Activated CD4-positive, alpha-beta T cell treated with anti-CD3 and anti-CD28 coated beads for 36 hours (primary cell): ENCODE measurements at regions of chr3 and their contacts with region 1.

Region 1: GRCh38 chr3:196081791-196082618 is at the start of gene TFRC:
- DNase-seq: peak; percentile 98
- ATAC-seq: peak; percentile 92
- H3K4me3 Mint-ChIP-seq: peak within 1 kb of the TSS; percentile 95
- H3K27ac Mint-ChIP-seq: peak within 1 kb of the TSS; percentile 93
- H3K4me1 Mint-ChIP-seq: peaks cover 30% of the 10 kb centered on the region
- H3K27me3 Mint-ChIP-seq: no peaks in the 10 kb centered on the region
- total RNA-seq, gene TFRC: 373 to 520 TPM

Region 2: DNA sequence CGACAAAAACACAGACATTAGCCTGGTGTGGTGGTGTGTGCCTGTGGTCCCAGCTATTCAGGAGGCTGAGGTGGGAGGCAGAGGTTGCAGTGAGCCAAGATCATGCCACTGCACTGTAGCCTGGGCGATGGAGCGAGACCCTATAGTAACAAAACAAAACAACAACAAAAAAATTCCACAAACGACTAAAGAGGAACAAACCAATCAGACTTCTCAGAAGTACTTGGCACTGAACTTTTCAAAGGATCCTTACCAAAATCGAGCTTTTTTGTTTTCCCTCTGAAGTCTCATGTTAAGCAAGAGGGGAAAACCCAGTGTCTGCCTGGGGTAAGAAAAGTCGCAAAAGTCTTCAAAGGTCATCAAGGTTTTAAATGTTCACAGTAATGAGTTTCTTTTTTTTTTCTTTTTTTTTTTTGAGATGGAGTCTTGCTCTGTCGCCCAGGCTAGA is 30.0 kb after region 1 on chr3:
- CTCF ChIA-PET with region 1: interaction called, 4 read pairs
- POLR2A ChIA-PET with region 1: interaction called, 6 read pairs
- intact Hi-C with region 1: loop called in 1 of 2 experiments (anchors 1 kb)
- DNase-seq: peak; percentile 52
- ATAC-seq: peak; percentile 91
- H3K4me3 Mint-ChIP-seq: peak overlapping the region; percentile 50
- H3K27ac Mint-ChIP-seq: peak overlapping the region; percentile 85
- H3K4me1 Mint-ChIP-seq: peaks cover 20% of the 10 kb centered on the region
- H3K27me3 Mint-ChIP-seq: no peaks in the 10 kb centered on the region

Region 3: DNA sequence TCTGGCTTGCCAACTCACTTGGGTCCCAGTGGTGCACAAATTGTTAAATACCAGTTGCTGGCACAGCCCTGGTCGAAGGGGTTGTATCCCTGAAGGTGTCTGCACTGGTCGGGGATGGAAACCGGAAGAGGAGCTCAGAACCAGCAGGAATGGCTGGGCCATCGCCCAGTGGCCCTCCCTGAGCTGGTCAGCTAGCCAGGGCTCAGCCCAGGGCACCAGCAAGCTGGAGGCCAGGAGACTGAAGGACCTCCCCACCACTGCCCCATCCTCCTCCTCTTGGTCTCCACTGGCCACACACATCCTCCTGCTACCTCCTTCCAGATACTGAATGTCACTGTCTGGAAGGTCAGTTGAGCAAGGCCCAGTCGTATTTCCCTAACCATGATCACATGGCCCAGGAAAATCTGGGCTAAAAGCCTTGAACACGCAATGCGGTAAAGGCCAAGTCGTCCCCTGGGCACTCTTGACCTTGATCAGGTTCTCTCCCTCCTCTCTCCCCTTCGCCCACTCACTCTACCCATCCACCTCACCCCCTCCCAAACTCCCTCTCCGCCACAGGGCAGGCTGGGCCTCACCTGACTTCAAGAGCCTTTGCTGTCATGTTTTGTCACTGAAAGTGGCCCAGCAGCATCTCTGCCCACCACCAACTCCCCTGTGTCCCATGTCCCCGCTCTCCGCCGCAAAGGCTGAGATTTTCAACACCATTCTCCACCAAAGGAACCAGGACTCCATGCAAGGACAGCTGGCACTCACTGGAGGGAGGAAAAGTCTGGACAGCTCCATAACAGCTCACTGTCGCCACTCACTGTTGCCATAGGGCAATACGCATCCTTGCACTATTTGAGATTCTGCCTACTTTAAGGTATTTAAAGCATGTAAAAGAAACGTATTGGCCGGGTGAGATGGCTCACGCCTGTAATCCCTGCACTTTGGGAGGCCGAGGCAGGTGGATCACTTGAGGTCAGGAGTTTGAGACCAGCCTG is 117.1 kb after region 1 on chr3:
- CTCF ChIA-PET with region 1: interaction called, 9 read pairs
- POLR2A ChIA-PET with region 1: no interaction called
- intact Hi-C with region 1: loop called in 1 of 2 experiments (anchors 2 kb)
- DNase-seq: no peak
- ATAC-seq: no peak
- H3K4me3 Mint-ChIP-seq: no peak overlapping the region
- H3K27ac Mint-ChIP-seq: no peak overlapping the region
- H3K4me1 Mint-ChIP-seq: peaks cover 7% of the 10 kb centered on the region
- H3K27me3 Mint-ChIP-seq: no peaks in the 10 kb centered on the region